Right ventricle myocardium superior (tissue), 1 donor: ENCODE measurements at regions of chr5 and their contacts with region 1.

Region 1: GRCh38 chr5:132293066-132293991 is 865 bp upstream of the SLC22A4 start:
- DNase-seq: peak; percentile 92
- ATAC-seq: peak; percentile 77

Region 2: GRCh38 chr5:132073231-132074013 is 219.9 kb before region 1 on chr5 and contains the start of gene CSF2:
- intact Hi-C with region 1: no loop called
- DNase-seq: no peak
- ATAC-seq: no peak
- total RNA-seq, gene CSF2: not detected

Region 3: GRCh38 chr5:132363431-132364112 is 70.2 kb after region 1 on chr5:
- intact Hi-C with region 1: loop called (anchors 5 kb)
- DNase-seq: no peak
- ATAC-seq: peak; percentile 89